ENCODE measurements at regions of chr2 and their contacts with region 1.

Region 1: DNA sequence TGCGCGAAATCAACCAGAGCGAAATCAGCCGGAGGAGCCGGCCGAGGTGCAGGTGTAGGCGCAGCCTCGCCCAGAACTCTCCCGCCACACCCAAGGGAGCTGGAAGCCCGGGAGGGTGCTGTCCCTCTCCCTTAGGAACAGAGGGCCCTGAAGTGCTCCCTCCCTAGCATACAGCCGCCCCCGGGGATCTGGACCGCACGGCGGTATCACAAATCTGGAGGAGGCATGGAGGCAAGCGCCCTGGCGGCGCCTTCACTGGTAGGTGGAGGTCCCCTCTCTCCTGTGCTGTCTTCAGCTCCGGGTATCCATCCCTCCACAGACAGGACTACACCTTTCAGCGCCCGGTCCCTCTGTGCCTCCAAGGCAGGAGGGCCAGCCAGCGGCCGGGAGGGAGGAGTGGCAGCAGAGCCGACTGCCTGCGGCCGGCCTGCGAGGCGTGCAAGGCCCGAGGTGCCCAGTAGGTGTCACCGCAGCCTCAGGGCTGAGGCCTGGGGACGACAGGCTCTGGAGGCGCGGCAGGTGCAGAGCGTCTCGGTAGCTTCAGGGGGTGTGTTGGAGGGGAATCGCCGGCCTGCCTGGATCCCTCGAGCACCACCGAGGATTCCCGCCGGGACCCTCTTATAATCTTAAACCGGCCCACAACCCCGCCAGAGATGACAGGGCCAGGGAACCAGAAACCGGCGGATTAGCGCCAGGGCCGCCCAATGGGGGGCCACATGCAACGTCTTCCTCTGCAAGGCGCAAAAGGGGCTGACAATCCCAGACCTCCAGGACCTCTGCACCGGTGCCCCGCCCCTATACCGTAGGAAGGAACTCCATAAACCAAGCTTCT is 2.8 kb downstream of the IHH start:
- DNase-seq: no peak
- H3K4me3 ChIP-seq: no peak overlapping the region
- H3K27me3 ChIP-seq: peaks cover 52% of the 10 kb centered on the region
- CTCF ChIP-seq: peak; percentile 93

Region 2: GRCh38 chr2:218876562-218877219 is 181.2 kb before region 1 on chr2:
- CTCF ChIA-PET with region 1: no interaction called
- POLR2A ChIA-PET with region 1: no interaction called
- DNase-seq: no peak
- H3K4me3 ChIP-seq: no peak overlapping the region
- H3K27me3 ChIP-seq: peaks cover 62% of the 10 kb centered on the region
- CTCF ChIP-seq: peak; percentile 94

Region 3: DNA sequence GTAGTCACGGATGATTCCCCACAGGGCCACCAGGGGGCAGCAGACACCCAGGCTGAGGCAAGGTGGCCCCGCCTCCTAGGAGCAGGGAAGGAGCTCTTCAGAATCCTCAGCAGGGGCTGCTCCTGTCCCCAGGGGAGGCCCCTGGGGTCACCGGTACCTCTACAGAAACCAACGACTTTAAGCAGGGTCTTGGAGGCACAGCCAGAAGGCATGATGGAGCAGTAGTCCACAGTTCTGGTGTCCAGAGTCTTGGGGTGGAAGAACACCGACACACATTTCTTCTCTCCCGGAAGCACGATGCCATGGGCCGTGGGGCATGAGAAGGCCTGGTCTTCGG is 28.1 kb before region 1 on chr2:
- CTCF ChIA-PET with region 1: interaction called, 37 read pairs
- POLR2A ChIA-PET with region 1: no interaction called
- DNase-seq: no peak
- H3K4me3 ChIP-seq: no peak overlapping the region
- H3K27me3 ChIP-seq: peaks cover 22% of the 10 kb centered on the region
- CTCF ChIP-seq: peak; percentile 97

Region 4: GRCh38 chr2:219073413-219074129 is 15.6 kb after region 1 on chr2:
- CTCF ChIA-PET with region 1: interaction called, 151 read pairs
- POLR2A ChIA-PET with region 1: no interaction called
- DNase-seq: no peak
- H3K4me3 ChIP-seq: no peak overlapping the region
- H3K27me3 ChIP-seq: no peaks in the 10 kb centered on the region
- CTCF ChIP-seq: peak; percentile 65

Region 5: DNA sequence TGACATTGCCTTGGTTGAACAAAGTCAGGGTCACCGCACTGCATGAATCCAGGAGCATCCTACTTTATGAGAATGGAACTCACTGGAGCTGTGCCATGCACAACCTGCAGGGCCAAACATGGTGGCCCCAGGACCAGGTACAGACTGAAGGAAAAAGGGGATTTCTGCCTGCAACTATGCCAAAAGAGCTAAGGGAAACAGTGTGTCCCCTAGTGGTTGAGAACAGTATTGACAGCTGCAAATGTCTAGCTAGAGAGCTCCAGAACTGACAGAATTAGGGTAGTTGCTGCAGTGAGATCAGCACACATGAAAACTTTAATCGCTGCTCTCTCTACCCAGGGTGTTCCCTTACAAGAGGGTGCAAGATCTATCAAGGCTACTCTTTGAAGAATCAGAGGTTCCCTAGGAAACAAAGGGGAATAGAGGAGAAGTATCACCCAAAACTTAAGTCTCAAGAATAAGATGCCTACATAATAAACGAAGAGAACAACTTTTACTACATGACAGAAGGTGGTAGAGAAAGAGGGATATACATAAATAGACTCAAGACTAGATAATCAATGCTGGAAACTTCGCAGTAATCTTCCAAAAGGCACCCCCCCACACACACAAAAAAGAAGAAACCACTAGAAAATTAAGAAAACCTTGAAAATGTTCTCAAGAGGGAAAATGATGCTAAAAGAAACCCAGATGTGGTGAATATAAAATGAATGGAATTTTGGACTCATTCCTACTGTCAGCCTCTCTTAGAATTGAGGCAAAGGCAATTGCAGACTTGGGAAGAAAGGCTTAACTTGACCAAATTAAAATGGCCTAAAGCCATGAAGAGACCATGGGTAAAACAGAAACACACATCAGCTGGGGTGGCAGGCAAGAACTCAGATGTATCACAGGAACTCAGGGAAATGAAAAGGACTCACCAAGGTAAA is 46.4 kb after region 1 on chr2:
- CTCF ChIA-PET with region 1: interaction called, 15 read pairs
- POLR2A ChIA-PET with region 1: no interaction called
- DNase-seq: peak; percentile 40
- H3K4me3 ChIP-seq: no peak overlapping the region
- H3K27me3 ChIP-seq: no peaks in the 10 kb centered on the region
- CTCF ChIP-seq: peak; percentile 80

Region 6: GRCh38 chr2:219160186-219161017 is 102.5 kb after region 1 on chr2 and contains the start of gene NHEJ1:
- CTCF ChIA-PET with region 1: interaction called, 211 read pairs
- POLR2A ChIA-PET with region 1: no interaction called
- DNase-seq: peak; percentile 63
- H3K4me3 ChIP-seq: peak within 1 kb of the TSS; percentile 73
- H3K27me3 ChIP-seq: no peaks in the 10 kb centered on the region
- CTCF ChIP-seq: peak; percentile 99
- polyA plus RNA-seq, gene NHEJ1: 23.9 and 24.1 TPM in 2 replicates

Measured in BJ (cell line).